ENCODE measurements at regions of chr7 and their contacts with region 1.

Region 1: GRCh38 chr7:26500749-26501352 is 209.2 kb downstream of the SNX10 start:
- DNase-seq: peak; percentile 65
- CTCF ChIP-seq: peak; percentile 46

Region 2: GRCh38 chr7:25894902-25895791 is 605.7 kb before region 1 on chr7:
- in situ Hi-C with region 1: loop called (anchors 25 kb)
- DNase-seq: peak; percentile 78
- CTCF ChIP-seq: peak; percentile 66

Region 3: DNA sequence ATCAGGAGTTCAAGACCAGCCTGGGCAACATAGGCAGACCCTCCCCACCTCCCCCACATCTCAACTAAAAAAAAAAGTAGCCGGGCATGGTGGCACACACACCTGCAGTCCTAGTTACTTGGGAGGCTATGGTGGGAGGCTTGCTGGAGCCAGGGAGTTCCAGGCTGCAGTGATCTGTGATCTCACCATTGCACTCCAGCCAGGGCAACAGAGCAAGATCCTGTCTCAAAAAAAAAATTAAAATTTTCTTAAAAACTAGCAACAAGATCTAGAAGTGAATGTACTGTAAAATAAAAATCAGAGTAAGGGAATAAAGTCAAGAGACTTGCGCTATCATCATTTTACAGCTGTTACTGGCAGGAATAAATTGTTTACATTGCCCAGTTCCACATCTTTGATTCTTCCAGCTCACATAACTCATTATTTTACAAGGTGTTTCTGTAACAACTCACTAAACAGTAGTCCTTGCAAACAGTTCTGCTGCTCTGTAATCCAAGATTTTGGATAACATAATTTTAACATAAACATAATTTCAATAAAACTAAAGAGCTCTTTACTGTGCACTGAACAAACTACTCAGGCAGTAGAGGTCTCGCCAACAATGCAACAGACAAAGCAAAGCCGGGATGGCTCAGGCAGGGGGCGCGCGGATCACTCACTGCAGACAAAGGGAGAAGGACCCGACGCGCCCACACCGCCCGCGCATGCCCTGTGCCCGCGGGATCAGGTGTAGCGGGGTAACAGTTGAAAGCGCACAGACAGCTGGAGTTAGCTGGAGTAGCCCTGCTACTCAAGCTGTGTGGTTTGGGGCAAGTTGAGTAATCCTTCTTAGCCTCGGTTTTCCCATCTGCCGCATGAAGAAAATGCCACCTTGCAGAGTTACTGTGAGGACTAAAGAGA is 422.2 kb before region 1 on chr7:
- in situ Hi-C with region 1: loop called (anchors 25 kb)
- DNase-seq: peak; percentile 68
- CTCF ChIP-seq: peak; percentile 60

Region 4: GRCh38 chr7:26167301-26167934 is 333.4 kb before region 1 on chr7:
- in situ Hi-C with region 1: no loop called
- DNase-seq: no peak
- CTCF ChIP-seq: no peak

Region 5: DNA sequence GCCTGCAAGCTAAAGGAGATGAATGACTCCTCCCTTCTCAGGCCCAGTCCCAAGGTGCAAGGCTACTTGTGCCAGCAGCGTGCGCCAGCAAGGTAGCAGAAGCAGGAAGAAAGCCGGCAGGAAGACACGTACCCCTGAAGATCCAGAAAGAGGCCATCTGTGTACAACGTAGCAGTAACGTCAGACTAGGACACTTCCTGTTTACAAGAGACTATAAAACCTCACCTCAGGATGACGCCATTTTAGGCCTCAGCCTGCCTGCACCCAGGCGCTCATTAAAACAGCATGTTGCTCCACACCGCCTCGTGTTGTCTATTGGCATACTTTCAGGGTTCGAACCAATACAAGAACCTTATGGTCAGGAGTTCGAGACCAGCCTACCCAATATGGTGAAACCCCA is 250.6 kb before region 1 on chr7:
- in situ Hi-C with region 1: no loop called
- DNase-seq: no peak
- CTCF ChIP-seq: no peak

Region 6: GRCh38 chr7:26376175-26376917 is 124.5 kb before region 1 on chr7:
- in situ Hi-C with region 1: loop called (anchors 5 kb)
- DNase-seq: peak; percentile 59
- CTCF ChIP-seq: no peak

Region 7: DNA sequence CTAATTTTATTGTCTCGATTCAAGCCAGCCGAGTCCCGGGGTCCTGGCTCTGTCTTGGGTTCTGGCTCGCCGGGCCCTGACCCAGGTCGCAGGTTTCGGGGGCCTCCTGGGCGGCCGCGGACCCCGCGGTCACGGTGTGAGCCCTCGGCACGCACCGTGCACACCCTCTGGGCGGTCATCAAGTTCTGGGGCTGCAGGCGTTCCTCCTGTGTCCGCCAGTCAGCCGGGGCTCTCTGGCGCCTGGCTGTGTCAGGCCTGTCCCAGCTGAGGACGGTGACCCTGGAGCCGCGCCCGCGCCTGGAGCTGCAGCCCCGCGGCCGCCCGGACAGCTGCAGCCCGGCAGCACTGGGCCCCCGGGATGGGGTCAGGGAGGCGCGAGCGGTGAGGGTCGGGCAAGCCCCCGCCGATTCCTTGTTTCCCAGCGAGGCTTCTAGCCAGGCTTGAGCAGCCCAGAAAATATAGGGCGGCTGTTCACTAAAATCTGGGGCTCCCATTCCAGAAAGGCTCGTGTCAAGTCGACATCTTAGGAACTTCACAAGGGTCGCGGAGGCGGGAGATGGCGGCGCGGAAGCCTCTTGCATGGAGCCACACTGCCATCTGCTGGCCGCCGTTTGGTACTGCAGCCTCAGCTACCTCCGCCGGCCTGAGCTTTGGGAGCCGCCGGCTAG is 659.8 kb after region 1 on chr7:
- in situ Hi-C with region 1: loop called (anchors 25 kb)
- DNase-seq: peak; percentile 90
- CTCF ChIP-seq: peak; percentile 98

Measured in GM13976 (cell line).